ENCODE measurements at regions of chr7 and their contacts with region 1.

Region 1: DNA sequence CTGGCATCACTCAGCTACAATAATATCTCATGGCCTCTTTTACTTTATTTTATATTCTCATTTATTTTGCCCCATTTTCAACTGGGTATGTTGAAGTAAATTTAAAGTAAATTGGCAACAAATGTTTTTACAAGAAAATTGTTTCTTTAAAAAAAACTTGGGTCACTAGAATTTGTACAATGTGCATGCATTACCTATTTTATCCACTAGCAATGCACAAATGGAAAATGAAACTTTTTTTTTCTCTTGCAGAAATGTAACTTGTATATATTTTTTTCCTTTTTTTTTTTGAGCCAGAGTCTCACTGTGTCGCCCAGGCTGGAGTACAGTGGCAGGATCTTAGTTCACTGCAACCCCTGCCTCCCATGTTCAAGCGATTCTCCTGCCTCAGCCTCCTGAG is 10.3 kb upstream of the H2AZ2 start:
- DNase-seq: no peak
- ATAC-seq: no peak
- H3K4me3 ChIP-seq: no peak overlapping the region
- H3K4me3 Mint-ChIP-seq: no peak overlapping the region
- H3K27ac ChIP-seq: no peak overlapping the region
- H3K27ac Mint-ChIP-seq: no peak overlapping the region
- H3K4me1 ChIP-seq: peaks cover 0 to 8% of the 10 kb centered on the region in 2 experiments
- H3K4me1 Mint-ChIP-seq: peaks cover 4 to 5% (median 4%) of the 10 kb centered on the region in 3 donors
- H3K27me3 ChIP-seq: peaks cover 0 to 6% of the 10 kb centered on the region in 2 experiments
- H3K27me3 Mint-ChIP-seq: peaks cover 0 to 3% of the 10 kb centered on the region in 2 donors

Region 2: GRCh38 chr7:44885394-44886317 is 27.5 kb after region 1 on chr7 and contains the start of gene PURB:
- CTCF ChIA-PET with region 1: interaction called, 3 to 16 read pairs
- POLR2A ChIA-PET with region 1: interaction called, 3 to 5 read pairs
- DNase-seq: peak; percentile 89 to 99 (median 95)
- ATAC-seq: peak; percentile 86 to 89 (median 88)
- H3K4me3 ChIP-seq: peak within 1 kb of the TSS; percentile 61 to 77
- H3K4me3 Mint-ChIP-seq: peak within 1 kb of the TSS; percentile 93 to 96 (median 95)
- H3K27ac ChIP-seq: peak within 1 kb of the TSS; percentile 100
- H3K27ac Mint-ChIP-seq: peak within 1 kb of the TSS; percentile 94 to 100
- H3K4me1 ChIP-seq: peaks cover 31 to 40% of the 10 kb centered on the region in 2 experiments
- H3K4me1 Mint-ChIP-seq: peaks cover 32 to 51% (median 40%) of the 10 kb centered on the region in 3 donors
- H3K27me3 ChIP-seq: no peaks in the 10 kb centered on the region
- H3K27me3 Mint-ChIP-seq: peaks cover 0 to 1% of the 10 kb centered on the region in 2 donors
- total RNA-seq, gene PURB: 19.5 to 29.8 (median 20.1) TPM

Region 3: GRCh38 chr7:44921607-44922359 is 63.6 kb after region 1 on chr7:
- CTCF ChIA-PET with region 1: interaction called, 11 to 27 read pairs
- POLR2A ChIA-PET with region 1: interaction called in 1 of 2 experiments, 4 read pairs
- DNase-seq: peak; percentile 68 to 98 (median 92)
- ATAC-seq: peak; percentile 96 to 98 (median 97)
- H3K4me3 ChIP-seq: no peak overlapping the region
- H3K4me3 Mint-ChIP-seq: no peak overlapping the region
- H3K27ac ChIP-seq: no peak overlapping the region
- H3K27ac Mint-ChIP-seq: no peak overlapping the region
- H3K4me1 ChIP-seq: peaks cover 0 to 10% of the 10 kb centered on the region in 2 experiments
- H3K4me1 Mint-ChIP-seq: peaks cover 5 to 8% (median 6%) of the 10 kb centered on the region in 3 donors
- H3K27me3 ChIP-seq: peaks cover 0 to 4% of the 10 kb centered on the region in 2 experiments
- H3K27me3 Mint-ChIP-seq: no peaks in the 10 kb centered on the region

Measured in T-cell (primary cell).